ENCODE measurements at regions of chrX and their contacts with region 1.

Region 1: GRCh38 chrX:47581731-47582647 is at the start of gene TIMP1:
- DNase-seq: peak in 8 of 9 donors; percentile 36 to 80 (median 46)
- ATAC-seq: peak; percentile 93
- H3K4me3 ChIP-seq: peak within 1 kb of the TSS; percentile 52
- H3K4me3 Mint-ChIP-seq: peak within 1 kb of the TSS; percentile 65 to 88 (median 76)
- H3K27ac ChIP-seq: peak within 1 kb of the TSS; percentile 58
- H3K27ac Mint-ChIP-seq: peak within 1 kb of the TSS; percentile 57 to 90 (median 82)
- H3K4me1 ChIP-seq: peaks cover 9 to 17% of the 10 kb centered on the region in 2 donors
- H3K4me1 Mint-ChIP-seq: peaks cover 15 to 40% (median 24%) of the 10 kb centered on the region in 7 donors
- H3K27me3 ChIP-seq: no peaks in the 10 kb centered on the region
- H3K27me3 Mint-ChIP-seq: no peaks in the 10 kb centered on the region
- total RNA-seq, gene TIMP1: 47.0 to 117 (median 85.2) TPM

Region 2: DNA sequence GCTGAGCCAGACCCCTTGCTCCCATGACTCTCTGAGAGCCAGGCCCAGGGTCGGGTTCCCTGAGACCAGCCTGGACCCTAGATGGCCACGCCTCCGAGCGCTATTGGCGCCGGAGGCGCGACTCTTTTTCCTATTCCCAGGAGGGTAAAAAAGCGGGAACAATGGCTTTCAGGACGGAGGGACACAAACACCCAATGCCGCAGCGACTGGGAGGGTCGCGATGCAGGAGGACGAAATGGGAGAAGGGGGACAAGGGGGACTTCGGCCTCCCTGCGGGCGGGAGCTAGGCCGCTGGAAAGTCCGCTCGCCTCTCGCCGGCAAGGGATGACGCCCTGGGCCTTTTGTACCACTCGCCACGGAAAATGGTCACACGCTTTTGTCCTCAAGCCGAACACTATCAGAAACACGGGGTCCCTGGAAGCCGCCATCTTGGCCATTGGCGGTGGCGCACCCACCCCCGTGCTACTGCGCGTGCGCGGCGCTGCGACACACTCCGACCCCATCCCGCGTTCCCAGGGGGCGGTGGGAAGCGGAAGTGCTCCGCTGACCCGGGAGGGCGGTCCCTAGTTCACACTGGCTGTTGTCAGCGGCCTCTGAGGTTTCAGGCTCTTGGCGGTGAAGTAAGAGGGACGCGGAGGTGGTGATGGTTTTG is 1135.1 kb before region 1 on chrX:
- CTCF ChIA-PET with region 1: no interaction called
- POLR2A ChIA-PET with region 1: no interaction called
- intact Hi-C with region 1: no loop called
- DNase-seq: peak; percentile 75 to 86 (median 81)
- ATAC-seq: peak; percentile 94
- H3K4me3 ChIP-seq: peak overlapping the region; percentile 83
- H3K4me3 Mint-ChIP-seq: peak overlapping the region; percentile 77 to 91 (median 85)
- H3K27ac ChIP-seq: peak overlapping the region; percentile 86
- H3K27ac Mint-ChIP-seq: peak overlapping the region; percentile 79 to 92 (median 90)
- H3K4me1 ChIP-seq: peaks cover 5 to 7% of the 10 kb centered on the region in 2 donors
- H3K4me1 Mint-ChIP-seq: peaks cover 0 to 29% (median 20%) of the 10 kb centered on the region in 7 donors
- H3K27me3 ChIP-seq: no peaks in the 10 kb centered on the region
- H3K27me3 Mint-ChIP-seq: no peaks in the 10 kb centered on the region

Region 3: DNA sequence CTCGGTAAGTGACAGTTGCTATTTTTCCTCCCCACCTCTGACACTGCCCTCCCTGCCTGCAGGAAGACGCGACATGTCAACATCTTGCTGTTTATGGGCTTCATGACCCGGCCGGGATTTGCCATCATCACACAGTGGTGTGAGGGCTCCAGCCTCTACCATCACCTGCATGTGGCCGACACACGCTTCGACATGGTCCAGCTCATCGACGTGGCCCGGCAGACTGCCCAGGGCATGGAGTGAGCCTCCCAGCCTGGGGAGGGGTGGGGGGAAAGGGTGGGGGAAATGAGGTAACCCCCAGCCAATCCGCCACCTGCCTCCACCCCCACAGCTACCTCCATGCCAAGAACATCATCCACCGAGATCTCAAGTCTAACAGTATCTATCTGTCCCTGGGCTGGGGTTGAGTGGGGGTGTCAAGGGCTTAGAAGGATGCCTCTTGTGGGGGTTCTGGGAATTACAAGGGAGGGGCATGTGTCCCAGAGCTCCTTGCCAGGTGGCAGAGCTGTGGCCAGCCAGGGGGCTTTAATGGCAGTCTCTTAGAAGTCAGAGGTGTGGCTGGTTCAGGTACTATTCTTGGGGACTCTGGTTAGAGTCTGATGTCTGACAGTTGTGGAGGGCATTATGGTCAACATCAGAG is 13.2 kb before region 1 on chrX:
- CTCF ChIA-PET with region 1: no interaction called
- POLR2A ChIA-PET with region 1: interaction called, 3 read pairs
- intact Hi-C with region 1: loop called in 1 of 2 experiments (anchors 1 kb)
- DNase-seq: peak in 6 of 9 donors; percentile 17 to 50 (median 38)
- ATAC-seq: peak; percentile 73
- H3K4me3 ChIP-seq: no peak overlapping the region
- H3K4me3 Mint-ChIP-seq: no peak overlapping the region
- H3K27ac ChIP-seq: no peak overlapping the region
- H3K27ac Mint-ChIP-seq: peak overlapping the region in 1 of 9 donors; percentile 5
- H3K4me1 ChIP-seq: peaks cover 0 to 10% of the 10 kb centered on the region in 2 donors
- H3K4me1 Mint-ChIP-seq: peaks cover 7 to 31% (median 22%) of the 10 kb centered on the region in 7 donors
- H3K27me3 ChIP-seq: no peaks in the 10 kb centered on the region
- H3K27me3 Mint-ChIP-seq: peaks cover 0 to 4% (median 0%) of the 10 kb centered on the region in 5 donors

Region 4: GRCh38 chrX:47595716-47596251 is 13.8 kb after region 1 on chrX:
- CTCF ChIA-PET with region 1: no interaction called
- POLR2A ChIA-PET with region 1: interaction called, 4 read pairs
- intact Hi-C with region 1: loop called in 1 of 2 experiments (anchors 1 kb)
- DNase-seq: peak in 2 of 9 donors; percentile 24 to 27
- ATAC-seq: no peak
- H3K4me3 ChIP-seq: no peak overlapping the region
- H3K4me3 Mint-ChIP-seq: peak overlapping the region in 7 of 10 donors; percentile 47 to 72 (median 54)
- H3K27ac ChIP-seq: peak overlapping the region; percentile 7
- H3K27ac Mint-ChIP-seq: peak overlapping the region; percentile 59 to 90 (median 82)
- H3K4me1 ChIP-seq: peaks cover 0 to 10% of the 10 kb centered on the region in 2 donors
- H3K4me1 Mint-ChIP-seq: peaks cover 4 to 23% (median 18%) of the 10 kb centered on the region in 7 donors
- H3K27me3 ChIP-seq: no peaks in the 10 kb centered on the region
- H3K27me3 Mint-ChIP-seq: peaks cover 0 to 6% (median 0%) of the 10 kb centered on the region in 5 donors

Region 5: GRCh38 chrX:47619486-47620302 is 37.7 kb after region 1 on chrX and contains the start of gene SYN1:
- CTCF ChIA-PET with region 1: no interaction called
- POLR2A ChIA-PET with region 1: interaction called, 8 read pairs
- intact Hi-C with region 1: loop called in 1 of 2 experiments (anchors 5 kb)
- DNase-seq: peak; percentile 66 to 84 (median 75)
- ATAC-seq: peak; percentile 96
- H3K4me3 ChIP-seq: peak within 1 kb of the TSS; percentile 35
- H3K4me3 Mint-ChIP-seq: peak within 1 kb of the TSS; percentile 49 to 76 (median 69)
- H3K27ac ChIP-seq: no peak within 1 kb of the TSS
- H3K27ac Mint-ChIP-seq: peak within 1 kb of the TSS in 3 of 9 donors; percentile 32 to 63 (median 39)
- H3K4me1 ChIP-seq: peaks cover 4% of the 10 kb centered on the region in 2 donors
- H3K4me1 Mint-ChIP-seq: peaks cover 0 to 38% (median 13%) of the 10 kb centered on the region in 7 donors
- H3K27me3 ChIP-seq: no peaks in the 10 kb centered on the region
- H3K27me3 Mint-ChIP-seq: peaks cover 0 to 61% (median 3%) of the 10 kb centered on the region in 5 donors
- total RNA-seq, gene SYN1: 0.24 to 1.5 (median 0.97) TPM

Region 6: DNA sequence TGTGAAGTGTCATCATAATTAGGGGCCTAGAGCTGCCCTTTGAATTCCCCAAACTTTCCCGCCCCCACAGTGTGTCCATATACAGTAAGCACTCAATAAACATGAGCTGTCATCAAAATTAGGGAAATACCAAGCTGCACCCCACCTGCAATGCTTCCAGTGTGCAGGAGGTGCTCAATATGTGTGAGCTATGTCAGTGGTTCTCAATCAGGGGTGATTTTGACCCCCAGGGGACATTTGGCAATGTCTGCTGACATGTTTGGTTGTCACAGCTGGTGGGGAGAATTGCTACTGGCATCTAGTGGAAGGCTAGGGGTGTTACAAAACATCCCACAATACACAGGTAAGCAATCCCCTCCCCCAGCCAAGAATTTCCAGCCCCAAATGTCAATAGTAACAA is 47.0 kb after region 1 on chrX:
- CTCF ChIA-PET with region 1: interaction called, 3 read pairs
- POLR2A ChIA-PET with region 1: interaction called, 8 read pairs
- intact Hi-C with region 1: loop called (anchors 2 to 5 kb)
- DNase-seq: peak in 4 of 9 donors; percentile 14 to 35 (median 30)
- ATAC-seq: peak; percentile 33
- H3K4me3 ChIP-seq: peak overlapping the region; percentile 33
- H3K4me3 Mint-ChIP-seq: peak overlapping the region; percentile 83 to 95 (median 90)
- H3K27ac ChIP-seq: peak overlapping the region; percentile 64
- H3K27ac Mint-ChIP-seq: peak overlapping the region; percentile 72 to 95 (median 89)
- H3K4me1 ChIP-seq: peaks cover 0 to 3% of the 10 kb centered on the region in 2 donors
- H3K4me1 Mint-ChIP-seq: peaks cover 0 to 34% (median 28%) of the 10 kb centered on the region in 7 donors
- H3K27me3 ChIP-seq: no peaks in the 10 kb centered on the region
- H3K27me3 Mint-ChIP-seq: peaks cover 0 to 3% (median 0%) of the 10 kb centered on the region in 5 donors

Measured in naive thymus-derived CD4-positive, alpha-beta T cell (primary cell).